ENCODE measurements at regions of chr10 and their contacts with region 1.

Region 1: GRCh38 chr10:97072851-97073665 is 112.7 kb downstream of the SLIT1 start:
- DNase-seq: peak; percentile 80
- ATAC-seq: peak; percentile 83

Region 2: DNA sequence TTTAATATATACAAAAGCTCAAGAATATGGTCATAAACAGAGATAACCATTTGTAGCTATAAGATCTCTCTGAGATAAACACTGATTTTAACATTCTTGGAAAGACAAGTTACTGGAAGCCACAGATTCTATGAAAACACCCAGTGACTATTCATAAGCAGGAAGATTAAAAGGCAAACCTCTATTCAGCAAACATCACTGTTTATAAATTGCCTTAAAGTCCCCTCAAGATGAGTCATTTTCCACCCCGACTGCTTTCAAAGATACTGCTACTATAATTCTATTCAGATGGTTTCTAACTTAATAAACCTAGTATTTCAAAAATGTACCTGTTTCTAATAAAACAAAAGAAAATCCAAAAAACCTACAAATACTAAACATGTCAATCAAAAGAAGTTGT is 507.3 kb before region 1 on chr10:
- intact Hi-C with region 1: no loop called
- DNase-seq: no peak
- ATAC-seq: peak in 1 of 2 donors; percentile 44

Region 3: GRCh38 chr10:97117372-97117771 is 44.3 kb after region 1 on chr10:
- intact Hi-C with region 1: loop called (anchors 2 to 5 kb)
- DNase-seq: no peak
- ATAC-seq: no peak

Region 4: GRCh38 chr10:97210543-97210961 is 137.5 kb after region 1 on chr10:
- intact Hi-C with region 1: loop called (anchors 1 to 5 kb)
- DNase-seq: peak; percentile 64
- ATAC-seq: peak in 1 of 2 donors; percentile 77

Measured in left cardiac atrium (tissue), 4 donors.